CD4-positive, alpha-beta T cell (primary cell): ENCODE measurements at regions of chr4 and their contacts with region 1.

Region 1: DNA sequence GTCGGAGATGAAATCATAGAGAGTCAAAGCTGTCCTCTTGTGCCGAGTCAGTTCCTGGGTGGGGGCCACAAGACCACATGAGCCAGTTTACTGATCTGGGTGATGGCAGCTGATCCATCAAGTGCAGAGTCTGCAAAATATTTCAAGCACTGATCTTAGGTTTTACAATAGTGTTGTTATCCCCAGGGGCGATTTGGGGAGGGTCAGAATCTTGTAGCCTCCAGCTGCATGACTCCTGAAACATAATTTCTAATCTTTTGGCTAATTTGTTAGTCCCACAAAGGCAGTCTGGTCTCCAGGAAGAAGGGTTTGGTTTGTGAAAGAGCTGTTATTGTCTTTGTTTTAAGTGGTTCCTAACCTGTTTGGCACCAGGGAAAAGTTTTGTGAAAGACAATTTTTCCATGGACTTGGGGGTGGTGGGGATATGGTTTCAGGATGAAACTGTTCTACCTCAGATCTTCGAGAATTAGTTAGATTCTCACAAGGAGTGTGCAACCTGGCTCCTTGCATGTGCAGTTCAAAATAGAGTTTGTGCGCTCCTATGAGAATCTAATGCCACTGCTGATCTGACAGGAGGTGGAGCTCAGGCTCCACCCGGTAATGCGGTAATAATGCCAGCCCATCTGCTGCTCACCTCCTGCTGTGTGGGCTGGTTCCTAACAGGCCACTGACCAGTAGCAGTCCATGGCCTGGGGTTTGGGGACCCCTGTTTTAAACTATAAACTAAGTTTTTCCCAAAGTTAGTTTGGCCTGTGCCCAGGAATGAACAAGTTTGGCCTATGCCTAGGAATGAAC is 29.2 kb downstream of the METAP1 start:
- DNase-seq: peak in 3 of 14 experiments; percentile 9 to 16 (median 14)
- ATAC-seq: no peak
- H3K4me3 ChIP-seq: no peak overlapping the region
- H3K4me3 Mint-ChIP-seq: no peak overlapping the region
- H3K27ac ChIP-seq: no peak overlapping the region
- H3K27ac Mint-ChIP-seq: peak overlapping the region; percentile 54
- H3K4me1 ChIP-seq: peaks cover 23% of the 10 kb centered on the region
- H3K4me1 Mint-ChIP-seq: peaks cover 85% of the 10 kb centered on the region
- H3K27me3 ChIP-seq: no peaks in the 10 kb centered on the region
- H3K27me3 Mint-ChIP-seq: no peaks in the 10 kb centered on the region
- CTCF ChIP-seq: no peak

Region 2: GRCh38 chr4:97159648-97160047 is 1865.0 kb before region 1 on chr4:
- CTCF ChIA-PET with region 1: no interaction called
- POLR2A ChIA-PET with region 1: no interaction called
- intact Hi-C with region 1: no loop called
- DNase-seq: no peak
- ATAC-seq: no peak
- H3K4me3 ChIP-seq: no peak overlapping the region
- H3K4me3 Mint-ChIP-seq: no peak overlapping the region
- H3K27ac ChIP-seq: no peak overlapping the region
- H3K27ac Mint-ChIP-seq: no peak overlapping the region
- H3K4me1 ChIP-seq: no peaks in the 10 kb centered on the region
- H3K4me1 Mint-ChIP-seq: no peaks in the 10 kb centered on the region
- H3K27me3 ChIP-seq: no peaks in the 10 kb centered on the region
- H3K27me3 Mint-ChIP-seq: no peaks in the 10 kb centered on the region
- CTCF ChIP-seq: no peak

Region 3: GRCh38 chr4:99002279-99002678 is 22.4 kb before region 1 on chr4:
- CTCF ChIA-PET with region 1: interaction called, 3 read pairs
- POLR2A ChIA-PET with region 1: no interaction called
- intact Hi-C with region 1: loop called in 1 of 2 experiments (anchors 2 kb)
- DNase-seq: no peak
- ATAC-seq: no peak
- H3K4me3 ChIP-seq: no peak overlapping the region
- H3K4me3 Mint-ChIP-seq: no peak overlapping the region
- H3K27ac ChIP-seq: no peak overlapping the region
- H3K27ac Mint-ChIP-seq: peak overlapping the region; percentile 54
- H3K4me1 ChIP-seq: peaks cover 5% of the 10 kb centered on the region
- H3K4me1 Mint-ChIP-seq: peaks cover 71% of the 10 kb centered on the region
- H3K27me3 ChIP-seq: no peaks in the 10 kb centered on the region
- H3K27me3 Mint-ChIP-seq: no peaks in the 10 kb centered on the region
- CTCF ChIP-seq: no peak